AG04450 (cell line): ENCODE measurements at regions of chr17 and their contacts with region 1.

Region 1: DNA sequence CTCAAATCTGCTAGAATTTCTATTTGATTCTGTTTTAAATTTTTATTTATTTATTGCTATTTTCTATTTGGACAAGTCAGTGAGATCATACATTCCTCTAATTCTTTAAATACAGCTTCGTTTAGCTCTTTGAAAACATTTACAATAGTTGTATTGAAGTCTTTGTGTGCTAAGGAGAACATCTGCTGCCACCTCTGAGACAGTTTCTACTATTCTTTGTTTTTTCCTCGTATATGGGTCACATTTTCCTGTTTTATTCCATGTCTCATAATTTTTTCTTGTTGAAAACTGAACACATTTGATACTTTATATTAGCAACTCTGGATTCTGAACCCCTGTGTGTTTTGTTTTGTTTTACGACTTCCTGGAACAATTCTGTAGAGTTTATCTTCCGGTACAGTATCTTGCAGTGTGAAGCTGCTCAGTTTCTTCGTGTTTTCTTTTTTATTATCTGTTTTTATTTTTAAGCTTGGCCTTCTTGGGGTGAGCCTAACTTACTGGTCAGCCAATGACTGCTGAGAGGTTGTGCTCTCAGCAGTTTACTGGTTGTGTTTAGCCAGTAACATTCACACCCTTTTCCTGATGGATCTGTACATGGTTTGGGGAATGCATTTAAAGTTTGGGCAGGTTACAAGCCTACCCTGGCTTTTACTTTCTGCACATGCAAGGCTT is 99.0 kb downstream of the CA4 start:
- DNase-seq: no peak
- H3K4me3 ChIP-seq: no peak overlapping the region
- H3K27ac ChIP-seq: peak overlapping the region; percentile 43
- H3K27me3 ChIP-seq: no peaks in the 10 kb centered on the region
- CTCF ChIP-seq: no peak

Region 2: GRCh38 chr17:60231234-60231633 is 17.5 kb before region 1 on chr17:
- CTCF ChIA-PET with region 1: interaction called, 11 read pairs
- POLR2A ChIA-PET with region 1: no interaction called
- DNase-seq: no peak
- H3K4me3 ChIP-seq: no peak overlapping the region
- H3K27ac ChIP-seq: no peak overlapping the region
- H3K27me3 ChIP-seq: no peaks in the 10 kb centered on the region
- CTCF ChIP-seq: peak; percentile 63

Region 3: DNA sequence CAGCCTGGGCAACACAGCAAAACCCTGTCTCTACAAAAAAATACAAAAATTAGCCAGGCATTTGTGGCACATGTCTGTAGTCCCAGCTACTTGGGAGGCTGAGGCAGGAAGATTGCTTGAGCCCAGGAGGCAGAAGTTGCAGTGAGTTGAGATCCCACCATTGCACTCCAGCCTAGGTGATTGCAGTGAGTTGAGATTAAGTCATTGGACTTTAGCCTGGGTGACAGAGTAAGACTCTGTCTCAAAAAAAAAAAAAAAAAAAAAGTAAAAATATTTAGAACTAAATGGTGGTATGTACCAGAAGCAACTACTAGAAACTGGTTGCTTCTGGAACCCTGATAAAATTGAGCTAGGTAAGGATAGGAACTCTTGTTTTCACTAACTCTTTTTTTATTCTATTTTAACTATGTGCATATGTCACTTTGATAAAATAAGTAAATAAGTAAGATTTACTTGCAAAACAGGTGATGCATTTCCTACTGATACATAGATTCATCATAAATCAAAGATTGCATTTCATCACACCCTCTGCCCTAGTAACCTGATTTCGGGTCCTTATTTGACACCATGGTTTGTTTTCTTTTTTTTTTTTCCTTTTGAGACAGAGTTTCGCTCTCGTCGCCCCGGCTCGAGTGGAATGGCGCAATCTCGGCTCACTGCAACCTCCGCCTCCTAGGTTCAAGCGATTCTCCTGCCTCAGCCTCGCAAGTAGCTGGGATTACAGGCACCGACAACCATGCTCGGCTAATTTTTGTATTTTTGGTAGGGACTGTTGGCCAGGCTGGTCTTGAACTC is 77.2 kb after region 1 on chr17:
- CTCF ChIA-PET with region 1: no interaction called
- POLR2A ChIA-PET with region 1: interaction called, 13 read pairs
- DNase-seq: no peak
- H3K4me3 ChIP-seq: no peak overlapping the region
- H3K27ac ChIP-seq: no peak overlapping the region
- H3K27me3 ChIP-seq: no peaks in the 10 kb centered on the region
- CTCF ChIP-seq: no peak